HCT116 (cell line): ENCODE measurements at regions of chr1 and their contacts with region 1.

Region 1: DNA sequence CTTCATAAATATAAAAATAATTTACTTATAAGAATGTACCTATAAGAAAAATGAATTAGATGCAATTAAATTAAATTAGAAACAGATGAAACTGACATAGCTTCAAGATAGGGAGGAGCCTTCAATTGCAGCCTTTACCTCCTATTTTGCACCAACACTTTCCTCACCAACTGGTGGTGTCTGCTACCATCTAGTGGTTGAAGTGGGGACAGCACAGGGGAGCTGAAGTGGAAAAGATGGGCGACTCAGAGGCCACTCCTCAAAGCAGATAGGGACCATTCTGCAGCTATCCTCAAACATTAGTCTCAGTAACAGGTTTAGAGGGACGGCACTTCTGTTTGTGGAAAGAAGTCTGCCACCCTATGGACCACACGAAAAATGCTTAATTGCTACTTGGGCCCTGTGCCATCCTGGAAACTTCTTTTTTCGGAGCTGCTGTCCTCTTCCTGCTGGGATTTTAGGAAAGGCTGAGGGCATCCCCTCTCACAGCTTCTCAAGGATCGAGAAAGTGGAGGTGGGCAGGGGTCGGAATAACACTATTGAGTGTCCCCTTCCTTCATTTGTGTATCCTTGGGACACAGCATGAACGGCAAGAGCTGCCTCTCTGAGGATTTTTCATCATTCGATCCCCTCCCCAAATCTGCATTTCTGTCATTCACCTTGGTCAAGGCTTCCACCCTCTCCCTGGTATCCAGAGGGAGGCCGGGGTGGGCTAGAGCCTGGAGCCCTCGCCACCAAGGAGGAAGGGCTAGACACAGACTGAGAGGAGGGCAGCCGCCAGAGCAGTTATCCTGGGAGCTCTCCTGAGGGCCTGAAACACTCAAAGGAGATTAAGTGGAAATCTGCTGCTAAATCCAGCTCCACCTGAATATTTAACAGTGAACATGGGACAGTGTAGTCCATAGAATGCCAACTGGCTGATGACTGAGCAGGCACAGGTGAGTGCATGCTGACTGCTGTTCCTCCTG is 9.6 kb downstream of the PROK1 start:
- DNase-seq: peak; percentile 69
- ATAC-seq: peak; percentile 83
- H3K4me3 ChIP-seq: no peak overlapping the region
- H3K27ac ChIP-seq: no peak overlapping the region
- H3K4me1 ChIP-seq: peaks cover 0 to 27% of the 10 kb centered on the region in 2 experiments; a peak in 3 of 4 replicates
- H3K27me3 ChIP-seq: no peaks in the 10 kb centered on the region
- CTCF ChIP-seq: peak; percentile 95 to 97 (median 96); a peak in 5 of 6 replicates
- POLR2A ChIP-seq: no peak
- RAD21 ChIP-seq: peak; percentile 98

Region 2: DNA sequence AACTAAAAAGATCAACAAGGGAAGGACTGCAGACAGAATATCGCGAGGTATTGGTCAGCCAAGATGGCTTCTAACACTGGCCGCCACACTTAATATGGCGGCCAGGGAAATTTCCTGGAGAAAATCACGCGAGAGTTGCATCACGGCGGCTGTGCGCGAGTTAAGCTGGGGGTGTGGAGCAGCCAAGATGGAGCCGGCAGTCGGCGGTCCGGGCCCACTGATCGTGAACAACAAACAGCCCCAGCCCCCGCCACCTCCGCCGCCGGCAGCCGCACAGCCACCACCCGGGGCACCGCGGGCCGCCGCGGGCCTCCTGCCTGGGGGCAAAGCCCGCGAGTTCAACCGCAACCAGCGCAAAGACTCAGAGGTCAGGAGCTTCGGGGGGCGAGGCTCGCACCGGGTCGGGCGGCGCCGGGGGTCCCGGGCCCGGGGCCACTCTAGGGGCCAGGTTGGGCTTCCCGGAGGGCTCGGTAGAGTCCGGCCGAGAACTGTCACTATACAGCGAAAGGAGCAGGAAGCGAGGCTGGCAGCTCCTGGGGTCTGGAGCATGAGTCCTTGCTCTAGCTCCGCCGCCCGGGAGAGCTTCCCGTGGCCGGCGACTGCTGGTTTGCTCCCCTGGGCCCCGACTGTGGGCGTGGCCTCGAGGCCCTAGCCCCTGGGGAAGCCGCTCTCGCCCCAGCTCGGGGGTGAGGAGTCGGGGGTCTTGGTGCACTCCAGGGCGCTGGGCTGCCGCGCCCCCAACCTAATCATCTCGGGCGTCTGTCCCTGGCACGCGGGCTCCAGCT is 425.9 kb before region 1 on chr1 and contains the start of gene STRIP1:
- CTCF ChIA-PET with region 1: interaction called, 15 read pairs
- POLR2A ChIA-PET with region 1: interaction called, 3 read pairs
- RAD21 ChIA-PET with region 1: no interaction called
- intact Hi-C with region 1: loop called (anchors 10 kb)
- DNase-seq: peak; percentile 91
- ATAC-seq: peak; percentile 89
- H3K4me3 ChIP-seq: peak within 1 kb of the TSS; percentile 88 to 89
- H3K27ac ChIP-seq: peak within 1 kb of the TSS; percentile 71
- H3K4me1 ChIP-seq: peaks cover 3 to 14% of the 10 kb centered on the region in 2 experiments; a peak in 3 of 4 replicates
- H3K27me3 ChIP-seq: no peaks in the 10 kb centered on the region
- CTCF ChIP-seq: no peak
- POLR2A ChIP-seq: peak; percentile 63
- RAD21 ChIP-seq: no peak
- total RNA-seq, gene STRIP1: 33.5 TPM

Region 3: DNA sequence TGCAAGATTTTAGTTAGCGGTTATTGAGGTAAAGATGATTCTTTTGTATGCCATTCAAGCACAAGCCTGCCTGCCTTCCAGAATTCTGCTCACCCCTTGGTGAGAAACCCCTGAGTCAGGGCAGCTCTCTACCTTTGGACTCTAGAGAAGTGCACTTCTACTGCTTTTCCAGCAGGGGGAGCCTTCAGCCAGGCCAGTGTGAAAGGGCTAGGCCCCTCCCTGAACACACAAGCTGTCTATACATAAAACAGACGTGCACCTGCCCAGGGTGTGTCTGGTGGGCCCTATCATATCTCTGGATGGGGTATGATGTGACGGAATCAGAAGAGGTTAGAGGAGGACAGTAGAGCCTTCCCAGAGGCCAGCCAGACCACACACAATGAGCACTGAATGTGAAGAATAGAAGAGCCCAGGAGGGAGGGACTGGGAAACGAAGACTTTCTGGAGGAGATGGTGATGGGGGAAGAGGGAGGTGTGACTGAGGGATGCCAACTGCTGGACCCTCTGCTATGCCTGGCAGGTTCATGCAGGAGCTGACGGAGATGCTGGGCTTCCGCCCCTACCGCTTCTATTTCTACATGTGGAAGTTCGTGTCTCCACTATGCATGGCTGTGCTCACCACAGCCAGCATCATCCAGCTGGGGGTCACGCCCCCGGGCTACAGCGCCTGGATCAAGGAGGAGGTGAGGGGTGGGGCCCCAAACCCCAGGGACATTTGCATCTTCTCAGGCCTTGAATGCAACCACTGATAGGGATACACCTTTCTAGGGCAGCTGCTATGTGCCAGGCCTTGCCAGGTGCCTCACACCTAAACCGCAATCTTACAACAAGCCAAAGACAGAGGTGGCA is 263.4 kb before region 1 on chr1:
- CTCF ChIA-PET with region 1: interaction called, 76 read pairs
- POLR2A ChIA-PET with region 1: no interaction called
- RAD21 ChIA-PET with region 1: interaction called in 1 of 2 experiments, 9 read pairs
- intact Hi-C with region 1: no loop called
- DNase-seq: peak; percentile 38
- ATAC-seq: peak; percentile 96
- H3K4me3 ChIP-seq: no peak overlapping the region
- H3K27ac ChIP-seq: no peak overlapping the region
- H3K4me1 ChIP-seq: peaks cover 0 to 6% of the 10 kb centered on the region in 2 experiments; a peak in 1 of 4 replicates
- H3K27me3 ChIP-seq: no peaks in the 10 kb centered on the region
- CTCF ChIP-seq: peak; percentile 69 to 95 (median 93)
- POLR2A ChIP-seq: no peak
- RAD21 ChIP-seq: peak; percentile 70

Region 4: GRCh38 chr1:110209715-110210603 is 250.6 kb before region 1 on chr1 and contains the start of gene KCNC4:
- CTCF ChIA-PET with region 1: interaction called, 107 read pairs
- POLR2A ChIA-PET with region 1: interaction called, 10 read pairs
- RAD21 ChIA-PET with region 1: interaction called, 13 to 34 read pairs
- intact Hi-C with region 1: no loop called
- DNase-seq: peak; percentile 56
- ATAC-seq: peak; percentile 90
- H3K4me3 ChIP-seq: peak within 1 kb of the TSS; percentile 57 to 74
- H3K27ac ChIP-seq: peak within 1 kb of the TSS; percentile 83
- H3K4me1 ChIP-seq: peaks cover 0 to 23% of the 10 kb centered on the region in 2 experiments; a peak in 2 of 4 replicates
- H3K27me3 ChIP-seq: no peaks in the 10 kb centered on the region
- CTCF ChIP-seq: no peak
- POLR2A ChIP-seq: no peak
- RAD21 ChIP-seq: no peak
- total RNA-seq, gene KCNC4: 13.0 TPM

Region 5: GRCh38 chr1:110338886-110339406 is 121.6 kb before region 1 on chr1 and contains the start of gene RBM15:
- CTCF ChIA-PET with region 1: interaction called, 15 read pairs
- POLR2A ChIA-PET with region 1: interaction called, 3 read pairs
- RAD21 ChIA-PET with region 1: interaction called in 1 of 2 experiments, 6 read pairs
- intact Hi-C with region 1: loop called (anchors 1 kb)
- DNase-seq: peak; percentile 100
- ATAC-seq: peak; percentile 81
- H3K4me3 ChIP-seq: peak within 1 kb of the TSS; percentile 69 to 89
- H3K27ac ChIP-seq: peak within 1 kb of the TSS; percentile 95
- H3K4me1 ChIP-seq: peaks cover 35 to 49% of the 10 kb centered on the region in 2 experiments
- H3K27me3 ChIP-seq: no peaks in the 10 kb centered on the region
- CTCF ChIP-seq: no peak
- POLR2A ChIP-seq: no peak
- RAD21 ChIP-seq: no peak
- total RNA-seq, gene RBM15: 44.0 TPM

Region 6: DNA sequence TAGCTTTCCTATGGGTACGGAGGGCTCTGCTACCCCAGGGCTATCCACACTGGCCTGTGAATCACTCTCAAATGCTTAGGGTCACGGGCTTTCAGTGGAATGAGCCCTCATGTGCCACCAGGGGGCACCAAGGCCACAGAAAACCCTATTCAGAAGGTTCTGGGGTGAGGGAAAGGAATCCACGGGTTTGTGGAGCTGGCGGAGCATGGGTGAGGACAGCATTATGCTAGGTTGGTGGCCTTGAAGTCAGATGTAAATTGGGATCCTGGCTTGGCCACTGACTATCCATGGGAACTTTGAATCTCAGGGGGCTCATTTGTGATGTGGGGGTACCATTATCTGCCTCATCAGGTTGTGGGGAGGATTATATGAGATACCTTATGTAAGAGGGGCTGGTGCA is 48.0 kb before region 1 on chr1:
- CTCF ChIA-PET with region 1: interaction called, 56 read pairs
- POLR2A ChIA-PET with region 1: interaction called, 11 read pairs
- RAD21 ChIA-PET with region 1: interaction called, 22 to 23 read pairs
- intact Hi-C with region 1: loop called (anchors 1 kb)
- DNase-seq: peak; percentile 54
- ATAC-seq: peak; percentile 78
- H3K4me3 ChIP-seq: no peak overlapping the region
- H3K27ac ChIP-seq: no peak overlapping the region
- H3K4me1 ChIP-seq: peaks cover 4 to 8% of the 10 kb centered on the region in 2 experiments; a peak in 3 of 4 replicates
- H3K27me3 ChIP-seq: no peaks in the 10 kb centered on the region
- CTCF ChIP-seq: peak; percentile 83 to 85 (median 84)
- POLR2A ChIP-seq: no peak
- RAD21 ChIP-seq: peak; percentile 94

Region 7: GRCh38 chr1:110495926-110496600 is 35.5 kb after region 1 on chr1:
- CTCF ChIA-PET with region 1: interaction called, 203 read pairs
- POLR2A ChIA-PET with region 1: interaction called, 4 read pairs
- RAD21 ChIA-PET with region 1: interaction called, 7 to 17 read pairs
- intact Hi-C with region 1: loop called (anchors 1 kb)
- DNase-seq: peak; percentile 68
- ATAC-seq: peak; percentile 94
- H3K4me3 ChIP-seq: no peak overlapping the region
- H3K27ac ChIP-seq: no peak overlapping the region
- H3K4me1 ChIP-seq: no peaks in the 10 kb centered on the region; a peak in 1 of 4 replicates
- H3K27me3 ChIP-seq: no peaks in the 10 kb centered on the region
- CTCF ChIP-seq: peak; percentile 87 to 97 (median 95)
- POLR2A ChIP-seq: no peak
- RAD21 ChIP-seq: peak; percentile 99

Region 8: GRCh38 chr1:110533230-110533629 is 72.7 kb after region 1 on chr1:
- CTCF ChIA-PET with region 1: no interaction called
- POLR2A ChIA-PET with region 1: no interaction called
- RAD21 ChIA-PET with region 1: no interaction called
- intact Hi-C with region 1: no loop called
- DNase-seq: no peak
- ATAC-seq: 0 out of 2 replicates have a peak, but pooled peaks have one; percentile 62
- H3K4me3 ChIP-seq: no peak overlapping the region
- H3K27ac ChIP-seq: no peak overlapping the region
- H3K4me1 ChIP-seq: no peaks in the 10 kb centered on the region
- H3K27me3 ChIP-seq: peaks cover 42% of the 10 kb centered on the region
- CTCF ChIP-seq: peak in 1 of 3 experiments; percentile 34; a peak in 2 of 6 replicates
- POLR2A ChIP-seq: no peak
- RAD21 ChIP-seq: 0 out of 2 replicates have a peak, but pooled peaks have one; percentile 7